ENCODE measurements at regions of chr4 and their contacts with region 1.

Region 1: GRCh38 chr4:67746797-67747495 is 7.2 kb downstream of the GNRHR start:
- DNase-seq: no peak
- H3K4me3 ChIP-seq: no peak overlapping the region
- CTCF ChIP-seq: peak; percentile 25

Region 2: DNA sequence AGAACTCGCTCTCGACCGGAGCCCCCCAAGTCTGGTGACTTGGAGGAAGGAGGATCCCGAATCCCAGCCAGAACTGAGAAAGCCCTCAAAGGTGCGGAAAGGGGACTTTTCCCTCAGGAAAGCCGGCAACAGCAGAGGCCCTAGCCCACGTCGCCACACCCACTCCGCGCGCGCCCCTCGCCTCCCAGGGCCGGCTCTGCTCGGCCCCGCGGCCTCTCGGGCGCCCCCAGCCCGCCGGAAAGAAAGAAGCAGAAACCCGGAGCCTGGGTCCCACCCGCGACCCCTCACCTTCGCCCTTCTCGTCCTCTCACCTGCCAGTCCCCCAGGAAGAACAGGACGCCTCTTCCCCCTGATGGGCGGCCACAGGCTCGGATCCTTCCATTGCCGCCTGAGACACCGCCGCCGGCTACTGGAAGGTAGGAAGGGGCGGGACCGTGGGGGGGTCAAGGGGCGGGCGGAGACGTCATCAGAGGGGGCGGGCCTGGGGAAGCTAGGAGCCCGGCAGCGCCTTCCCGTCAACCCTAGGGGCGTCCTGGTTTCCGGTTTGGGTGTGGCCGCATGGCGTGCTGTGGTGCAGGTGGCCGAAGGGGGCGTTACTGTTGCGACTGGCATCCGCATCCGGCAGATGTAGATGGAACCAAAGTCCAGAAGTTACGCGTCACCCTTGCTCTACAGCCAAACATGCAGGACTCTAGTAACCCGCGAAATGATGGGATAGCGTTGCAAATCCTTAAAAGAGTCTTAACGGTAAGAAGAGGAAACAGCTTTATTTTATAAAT is 46.0 kb before region 1 on chr4 and contains the start of gene UBA6:
- CTCF ChIA-PET with region 1: interaction called, 17 read pairs
- POLR2A ChIA-PET with region 1: no interaction called
- DNase-seq: peak; percentile 73
- H3K4me3 ChIP-seq: peak within 1 kb of the TSS; percentile 84
- CTCF ChIP-seq: peak; percentile 47

Region 3: DNA sequence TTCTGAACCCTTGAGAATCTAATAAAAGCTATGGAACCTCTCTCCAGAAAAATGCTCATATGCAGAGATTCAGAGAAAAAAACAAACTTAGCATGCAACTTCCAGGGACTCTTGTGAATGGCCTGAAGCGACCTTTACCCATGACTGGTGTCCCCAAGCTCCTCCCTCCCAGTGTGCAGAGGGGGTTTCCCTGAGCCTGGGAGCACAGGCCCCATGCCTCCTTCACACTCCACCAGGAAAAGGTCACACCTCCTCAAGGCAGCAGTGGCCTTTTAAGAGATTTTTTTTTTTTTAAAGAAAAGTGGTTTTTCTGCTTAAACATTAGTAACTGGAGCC is 32.7 kb before region 1 on chr4:
- CTCF ChIA-PET with region 1: interaction called, 21 read pairs
- POLR2A ChIA-PET with region 1: no interaction called
- DNase-seq: no peak
- H3K4me3 ChIP-seq: no peak overlapping the region
- CTCF ChIP-seq: no peak

Region 4: DNA sequence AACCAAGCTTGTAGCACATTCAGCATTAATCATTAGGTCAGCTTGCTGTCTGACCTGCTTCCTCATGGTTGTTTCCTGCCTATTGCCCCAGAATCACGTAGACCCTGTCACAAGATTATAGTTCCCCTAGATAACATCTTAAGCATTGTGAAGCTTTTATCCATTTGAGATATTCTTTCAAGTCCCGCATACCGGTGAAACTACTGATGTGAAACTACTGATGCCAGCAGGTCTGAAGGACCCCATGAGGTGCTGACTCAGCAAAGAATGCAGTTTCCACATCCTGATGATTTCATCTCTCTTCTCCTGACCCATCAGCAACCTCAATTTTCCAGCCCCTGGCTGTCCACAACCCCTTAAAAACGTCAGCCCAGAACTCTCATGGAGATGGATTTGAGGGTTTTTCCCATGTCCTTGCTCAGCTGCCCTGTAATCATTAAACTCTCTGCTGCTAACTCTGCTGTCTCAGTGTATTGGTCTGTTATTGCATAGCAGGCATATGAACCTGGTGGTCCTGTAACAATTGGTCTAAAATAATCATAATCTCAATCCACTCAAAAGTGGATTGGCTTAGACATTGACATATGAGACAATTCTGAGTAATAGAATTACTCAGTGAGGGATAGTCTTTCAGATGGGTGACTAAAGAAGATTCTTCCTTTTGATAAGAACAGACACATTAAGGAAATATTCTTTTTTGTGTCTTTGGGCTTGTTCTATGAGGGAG is 19.7 kb before region 1 on chr4:
- CTCF ChIA-PET with region 1: interaction called, 24 read pairs
- POLR2A ChIA-PET with region 1: no interaction called
- DNase-seq: no peak
- H3K4me3 ChIP-seq: no peak overlapping the region
- CTCF ChIP-seq: no peak

Region 5: DNA sequence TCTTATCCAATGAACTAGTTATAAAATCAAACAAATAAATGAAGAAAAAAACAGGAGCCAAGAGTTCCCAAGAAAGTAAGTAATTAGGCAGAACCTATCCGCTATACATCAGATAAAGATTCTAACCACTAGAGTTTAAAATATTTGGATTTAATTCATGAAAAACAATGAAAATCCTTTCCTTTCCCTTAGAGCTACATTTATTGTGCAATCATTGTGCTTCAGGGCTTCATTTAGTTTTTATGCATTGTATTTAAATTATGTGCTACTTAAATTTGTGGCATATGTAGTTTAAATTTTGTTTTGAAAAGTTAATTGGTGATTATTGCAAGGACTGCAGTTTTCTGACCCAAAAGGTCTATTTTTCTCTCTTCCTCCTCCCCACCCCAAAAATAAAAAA is 10.7 kb before region 1 on chr4:
- CTCF ChIA-PET with region 1: interaction called, 15 read pairs
- POLR2A ChIA-PET with region 1: no interaction called
- DNase-seq: no peak
- H3K4me3 ChIP-seq: no peak overlapping the region
- CTCF ChIP-seq: no peak

Region 6: DNA sequence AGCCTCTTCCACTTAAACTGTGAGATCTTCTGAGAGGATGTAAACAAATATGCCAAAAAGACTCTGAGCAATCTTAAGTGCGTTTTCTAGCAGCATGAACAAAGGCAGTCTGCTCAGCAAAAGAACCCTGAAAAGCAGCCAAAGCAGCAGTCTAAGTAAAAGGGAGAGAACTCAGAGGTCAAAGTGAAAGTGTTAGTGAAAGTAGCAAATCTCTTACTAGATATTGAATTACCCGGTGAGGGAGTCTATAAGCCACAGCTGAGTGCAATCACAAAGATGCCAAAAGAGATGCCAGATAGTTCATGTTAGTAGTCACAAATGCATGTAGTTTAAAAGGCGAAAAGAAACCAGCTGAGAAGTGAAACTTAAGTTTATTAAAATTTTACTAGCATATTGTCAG is 15.1 kb after region 1 on chr4:
- CTCF ChIA-PET with region 1: interaction called, 59 read pairs
- POLR2A ChIA-PET with region 1: no interaction called
- DNase-seq: no peak
- H3K4me3 ChIP-seq: no peak overlapping the region
- CTCF ChIP-seq: no peak

Region 7: GRCh38 chr4:68175562-68176155 is 428.7 kb after region 1 on chr4:
- CTCF ChIA-PET with region 1: interaction called, 10 read pairs
- POLR2A ChIA-PET with region 1: no interaction called
- DNase-seq: peak; percentile 3
- H3K4me3 ChIP-seq: no peak overlapping the region
- CTCF ChIP-seq: peak; percentile 46

Region 8: DNA sequence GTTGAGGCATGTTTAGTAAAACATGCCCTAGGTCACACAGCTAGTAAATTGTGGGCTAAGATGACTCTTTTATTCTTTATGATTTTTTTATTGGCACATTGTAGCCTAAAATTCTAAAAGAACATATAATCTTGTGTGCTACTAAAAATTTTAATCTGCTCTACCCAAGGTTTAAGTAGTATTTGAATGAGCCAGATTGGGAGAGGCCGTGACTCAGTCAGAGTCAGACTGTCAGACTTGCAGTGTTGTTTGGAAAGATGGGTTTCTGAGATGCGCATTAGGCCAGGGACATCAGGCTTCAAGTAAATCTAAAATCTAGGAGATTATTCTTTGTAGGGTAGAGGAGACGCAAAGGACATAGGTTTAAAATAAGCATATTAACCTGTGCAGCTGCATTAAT is 669.6 kb after region 1 on chr4:
- CTCF ChIA-PET with region 1: no interaction called
- POLR2A ChIA-PET with region 1: no interaction called
- DNase-seq: no peak
- H3K4me3 ChIP-seq: no peak overlapping the region
- CTCF ChIP-seq: no peak

Measured in AG04449 (cell line).